MCF 10A (cell line): ENCODE measurements at regions of chr5 and their contacts with region 1.

Region 1: DNA sequence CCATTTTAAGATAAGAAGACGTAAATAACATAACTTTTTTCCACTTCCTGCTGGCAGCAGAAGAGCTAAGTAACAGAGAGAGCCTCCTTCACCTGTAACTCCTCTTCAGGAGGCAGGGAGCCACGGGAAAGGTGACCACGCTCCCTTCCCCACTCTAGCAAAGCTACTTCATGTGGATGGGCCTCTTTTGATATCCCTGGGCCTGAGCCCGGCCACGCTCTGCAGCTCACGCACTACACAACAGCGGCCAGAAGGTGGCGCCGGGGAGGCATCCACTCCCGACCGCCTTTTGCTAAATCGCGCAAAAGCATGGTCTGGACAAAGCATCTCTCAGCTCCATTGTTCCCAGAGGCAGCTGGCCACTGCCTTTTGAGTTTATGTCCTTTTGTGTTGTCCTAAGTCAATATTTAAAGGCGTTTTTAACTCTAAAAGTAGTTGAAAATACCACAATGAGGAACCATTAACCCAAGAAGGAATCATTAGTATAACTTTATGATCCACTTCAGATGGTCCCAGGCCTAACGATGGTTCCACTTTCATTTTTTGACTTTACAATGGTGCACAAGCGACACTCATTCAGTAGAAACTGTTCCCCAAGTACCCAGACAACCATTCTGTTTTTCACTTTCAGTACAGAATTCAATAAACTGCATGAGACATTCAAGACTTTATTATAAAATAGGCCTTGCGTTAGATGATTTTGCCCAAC is 23.6 kb downstream of the CMBL start:
- DNase-seq: peak; percentile 79
- H3K4me3 Mint-ChIP-seq: no peak overlapping the region
- H3K27ac Mint-ChIP-seq: no peak overlapping the region
- H3K4me1 Mint-ChIP-seq: peaks cover 16% of the 10 kb centered on the region
- H3K27me3 Mint-ChIP-seq: no peaks in the 10 kb centered on the region
- CTCF ChIP-seq: peak; percentile 93

Region 2: DNA sequence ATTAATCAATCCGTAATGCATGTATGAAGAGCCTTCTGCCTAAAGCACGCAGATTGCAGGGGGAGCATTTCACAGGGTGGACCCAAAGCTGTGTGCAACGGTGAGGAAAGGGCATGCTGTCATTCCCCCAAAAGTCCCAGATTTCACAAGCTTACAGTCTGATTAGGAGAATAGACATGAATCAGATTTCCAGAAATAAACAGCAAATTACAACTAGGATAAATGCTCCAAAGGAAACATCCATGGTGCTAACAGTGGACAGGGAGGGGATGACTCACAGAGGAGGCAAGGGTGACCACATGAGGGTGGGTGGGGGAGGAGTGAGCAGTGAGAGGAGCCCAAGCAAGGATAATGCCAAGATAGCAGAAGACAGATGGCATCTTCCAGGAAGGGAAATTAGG is 395.6 kb before region 1 on chr5:
- CTCF ChIA-PET with region 1: no interaction called
- POLR2A ChIA-PET with region 1: no interaction called
- intact Hi-C with region 1: no loop called
- DNase-seq: peak; percentile 86
- H3K4me3 Mint-ChIP-seq: no peak overlapping the region
- H3K27ac Mint-ChIP-seq: peak overlapping the region; percentile 5
- H3K4me1 Mint-ChIP-seq: peaks cover 10% of the 10 kb centered on the region
- H3K27me3 Mint-ChIP-seq: no peaks in the 10 kb centered on the region
- CTCF ChIP-seq: no peak

Region 3: DNA sequence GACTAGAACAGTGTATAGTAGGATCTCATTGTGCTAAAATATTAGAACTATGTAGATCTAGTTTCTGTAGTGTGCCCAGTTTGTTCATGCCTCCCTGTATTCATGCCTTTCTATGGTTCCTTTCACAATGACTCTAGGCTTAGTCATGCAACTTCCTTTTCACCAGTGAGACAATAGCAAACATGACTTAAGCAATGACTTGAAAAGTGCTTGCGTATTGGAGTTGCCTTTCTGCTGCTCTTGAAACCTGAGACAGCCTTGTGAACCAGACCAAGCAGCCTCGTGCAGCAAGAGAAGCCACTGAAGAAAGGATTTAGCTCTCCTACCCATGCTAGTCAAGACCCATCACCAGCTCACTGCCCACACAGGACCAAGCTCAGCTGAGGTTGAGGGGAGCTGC is 359.5 kb before region 1 on chr5:
- CTCF ChIA-PET with region 1: no interaction called
- POLR2A ChIA-PET with region 1: no interaction called
- intact Hi-C with region 1: no loop called
- DNase-seq: peak; percentile 97
- H3K4me3 Mint-ChIP-seq: no peak overlapping the region
- H3K27ac Mint-ChIP-seq: peak overlapping the region; percentile 95
- H3K4me1 Mint-ChIP-seq: peaks cover 26% of the 10 kb centered on the region
- H3K27me3 Mint-ChIP-seq: no peaks in the 10 kb centered on the region
- CTCF ChIP-seq: no peak

Region 4: DNA sequence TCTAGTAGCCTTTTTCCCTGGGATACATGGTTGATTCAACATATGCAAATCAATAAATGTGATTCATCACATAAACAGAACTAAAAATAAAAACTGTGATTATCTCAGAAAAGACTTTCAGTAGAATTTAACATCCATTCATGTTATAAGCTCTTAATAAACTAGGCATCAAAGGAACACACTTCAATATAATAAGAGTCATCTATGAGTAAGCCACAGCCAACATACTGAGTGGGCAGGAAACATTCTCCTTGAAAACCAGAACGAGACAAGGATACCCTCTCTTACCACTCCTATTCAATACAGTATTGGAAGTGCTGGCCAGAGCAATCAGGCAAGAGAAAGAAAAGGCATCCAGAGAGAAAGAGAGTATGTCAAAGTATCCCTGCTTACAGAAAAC is 274.3 kb before region 1 on chr5:
- CTCF ChIA-PET with region 1: no interaction called
- POLR2A ChIA-PET with region 1: no interaction called
- intact Hi-C with region 1: no loop called
- DNase-seq: no peak
- H3K4me3 Mint-ChIP-seq: no peak overlapping the region
- H3K27ac Mint-ChIP-seq: no peak overlapping the region
- H3K4me1 Mint-ChIP-seq: no peaks in the 10 kb centered on the region
- H3K27me3 Mint-ChIP-seq: no peaks in the 10 kb centered on the region
- CTCF ChIP-seq: no peak

Region 5: DNA sequence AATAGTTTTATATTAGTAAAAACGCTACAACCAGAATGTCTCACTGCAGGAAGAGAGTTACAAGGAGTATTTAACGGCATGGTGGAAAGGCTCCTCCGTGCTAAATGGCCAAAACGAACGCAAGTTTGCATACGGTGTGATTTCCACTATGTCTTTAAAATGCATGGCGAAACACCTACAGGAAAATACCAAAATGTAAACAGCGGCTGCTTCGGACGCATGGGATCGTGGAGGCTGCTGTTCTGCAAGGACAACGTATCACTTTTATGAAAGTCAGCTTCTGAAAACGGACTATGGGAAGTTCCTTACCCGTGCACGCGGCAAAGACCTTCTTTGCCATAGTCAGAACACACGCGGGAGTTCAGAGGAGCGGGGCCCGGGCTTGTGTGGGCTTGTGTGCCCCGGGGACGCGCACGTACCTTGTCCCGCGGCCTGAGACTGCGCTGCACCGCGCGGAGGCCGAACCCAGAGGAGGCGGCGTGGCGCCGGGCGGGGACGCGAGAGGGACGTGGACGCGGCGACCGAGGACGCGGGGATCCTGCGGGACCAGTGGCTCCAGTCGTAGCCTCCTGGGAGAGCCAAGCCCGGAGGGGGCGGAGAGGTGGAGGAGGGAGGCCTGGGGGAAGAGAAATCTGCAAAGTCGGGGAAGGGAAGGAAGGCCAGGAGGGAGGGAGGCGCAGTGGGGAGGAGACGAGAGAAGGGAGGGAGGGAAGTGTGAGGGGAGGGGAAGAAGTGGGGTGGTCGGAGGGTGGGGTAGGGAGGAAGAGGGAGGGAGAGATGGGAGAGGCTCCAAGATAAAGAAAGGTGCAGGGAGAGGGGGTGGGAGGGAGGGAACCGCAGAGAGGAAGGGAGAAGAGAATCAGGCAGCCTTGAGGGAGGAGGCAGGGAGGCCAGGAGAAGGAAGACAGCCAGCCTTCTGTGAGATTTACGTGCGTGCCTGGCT is 23.4 kb after region 1 on chr5 and contains the start of gene CMBL:
- CTCF ChIA-PET with region 1: interaction called, 9 read pairs
- POLR2A ChIA-PET with region 1: interaction called, 12 read pairs
- intact Hi-C with region 1: loop called (anchors 2 kb)
- DNase-seq: peak; percentile 85
- H3K4me3 Mint-ChIP-seq: peak within 1 kb of the TSS; percentile 85
- H3K27ac Mint-ChIP-seq: peak within 1 kb of the TSS; percentile 86
- H3K4me1 Mint-ChIP-seq: peaks cover 52% of the 10 kb centered on the region
- H3K27me3 Mint-ChIP-seq: no peaks in the 10 kb centered on the region
- CTCF ChIP-seq: no peak
- total RNA-seq, gene CMBL: 17.6 and 24.9 TPM in 2 replicates

Region 6: DNA sequence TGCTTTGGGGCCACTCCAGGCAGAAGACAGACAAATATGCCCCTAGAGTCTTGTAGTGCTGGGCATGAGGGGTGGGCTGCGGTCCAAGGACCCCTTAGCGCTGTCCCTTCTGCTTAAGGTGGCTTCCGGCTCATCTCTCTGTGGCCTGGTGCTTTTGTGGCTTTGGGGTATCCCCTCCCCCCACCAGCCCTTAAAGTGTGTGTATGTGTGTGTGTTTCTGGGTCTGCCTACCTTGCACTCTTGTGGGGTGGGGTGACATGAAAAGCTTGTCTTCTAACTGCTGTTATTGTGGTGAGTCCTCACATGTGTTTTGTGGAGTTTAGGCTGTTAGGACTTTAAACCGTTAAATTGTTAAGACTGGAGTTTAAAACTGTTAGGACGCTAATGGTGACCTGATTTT is 93.0 kb after region 1 on chr5:
- CTCF ChIA-PET with region 1: interaction called, 11 read pairs
- POLR2A ChIA-PET with region 1: no interaction called
- intact Hi-C with region 1: no loop called
- DNase-seq: no peak
- H3K4me3 Mint-ChIP-seq: no peak overlapping the region
- H3K27ac Mint-ChIP-seq: no peak overlapping the region
- H3K4me1 Mint-ChIP-seq: peaks cover 22% of the 10 kb centered on the region
- H3K27me3 Mint-ChIP-seq: no peaks in the 10 kb centered on the region
- CTCF ChIP-seq: no peak

Region 7: GRCh38 chr5:10424124-10424731 is 140.1 kb after region 1 on chr5:
- CTCF ChIA-PET with region 1: interaction called, 36 read pairs
- POLR2A ChIA-PET with region 1: interaction called, 3 read pairs
- intact Hi-C with region 1: loop called (anchors 1 kb)
- DNase-seq: peak; percentile 40
- H3K4me3 Mint-ChIP-seq: no peak overlapping the region
- H3K27ac Mint-ChIP-seq: no peak overlapping the region
- H3K4me1 Mint-ChIP-seq: no peaks in the 10 kb centered on the region
- H3K27me3 Mint-ChIP-seq: no peaks in the 10 kb centered on the region
- CTCF ChIP-seq: peak; percentile 42

Region 8: DNA sequence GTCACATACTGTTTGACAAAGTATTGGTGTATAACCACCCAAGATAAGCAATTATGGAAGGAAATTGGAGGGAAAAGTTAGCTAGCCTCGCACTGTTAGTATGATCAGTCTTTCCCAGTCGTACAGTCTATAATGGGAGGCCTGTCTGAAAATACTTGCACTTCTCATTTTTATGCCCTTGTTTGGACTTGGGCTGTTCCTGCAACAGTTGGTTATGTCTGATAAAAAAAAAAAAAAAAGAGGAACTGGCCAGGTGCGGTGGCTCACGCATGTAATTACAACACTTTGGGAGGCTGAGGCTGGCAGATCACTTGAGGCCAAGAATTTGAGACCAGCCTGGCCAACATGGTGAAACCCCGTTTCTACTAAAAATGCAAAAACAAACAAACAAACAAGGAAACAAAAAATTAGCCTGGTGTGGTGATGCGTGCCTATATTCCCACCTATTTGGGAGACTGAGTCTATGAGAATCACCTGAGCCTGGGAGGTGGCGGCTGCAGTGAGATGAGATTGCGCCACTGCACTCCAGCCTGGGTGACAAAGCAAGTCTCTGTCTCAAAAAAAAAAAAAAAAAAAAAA is 221.5 kb after region 1 on chr5:
- CTCF ChIA-PET with region 1: no interaction called
- POLR2A ChIA-PET with region 1: no interaction called
- intact Hi-C with region 1: no loop called
- DNase-seq: no peak
- H3K4me3 Mint-ChIP-seq: no peak overlapping the region
- H3K27ac Mint-ChIP-seq: no peak overlapping the region
- H3K4me1 Mint-ChIP-seq: no peaks in the 10 kb centered on the region
- H3K27me3 Mint-ChIP-seq: no peaks in the 10 kb centered on the region
- CTCF ChIP-seq: no peak

Region 9: GRCh38 chr5:10627160-10627701 is 343.1 kb after region 1 on chr5:
- CTCF ChIA-PET with region 1: interaction called, 3 read pairs
- POLR2A ChIA-PET with region 1: no interaction called
- intact Hi-C with region 1: loop called (anchors 5 kb)
- DNase-seq: no peak
- H3K4me3 Mint-ChIP-seq: peak overlapping the region; percentile 50
- H3K27ac Mint-ChIP-seq: peak overlapping the region; percentile 17
- H3K4me1 Mint-ChIP-seq: peaks cover 27% of the 10 kb centered on the region
- H3K27me3 Mint-ChIP-seq: no peaks in the 10 kb centered on the region
- CTCF ChIP-seq: no peak